ENCODE measurements at regions of chr17 and their contacts with region 1.

Region 1: GRCh38 chr17:15257258-15257788 is 7.8 kb downstream of the PMP22 start:
- ATAC-seq: peak in 4 of 8 experiments; percentile 2 to 18 (median 6)
- H3K4me3 ChIP-seq: no peak overlapping the region
- H3K27ac ChIP-seq: no peak overlapping the region
- H3K4me1 ChIP-seq: no peaks in the 10 kb centered on the region

Region 2: GRCh38 chr17:15143524-15143923 is 113.8 kb before region 1 on chr17:
- in situ Hi-C with region 1: no loop called
- ATAC-seq: no peak
- H3K4me3 ChIP-seq: no peak overlapping the region
- H3K27ac ChIP-seq: no peak overlapping the region
- H3K4me1 ChIP-seq: no peaks in the 10 kb centered on the region

Region 3: DNA sequence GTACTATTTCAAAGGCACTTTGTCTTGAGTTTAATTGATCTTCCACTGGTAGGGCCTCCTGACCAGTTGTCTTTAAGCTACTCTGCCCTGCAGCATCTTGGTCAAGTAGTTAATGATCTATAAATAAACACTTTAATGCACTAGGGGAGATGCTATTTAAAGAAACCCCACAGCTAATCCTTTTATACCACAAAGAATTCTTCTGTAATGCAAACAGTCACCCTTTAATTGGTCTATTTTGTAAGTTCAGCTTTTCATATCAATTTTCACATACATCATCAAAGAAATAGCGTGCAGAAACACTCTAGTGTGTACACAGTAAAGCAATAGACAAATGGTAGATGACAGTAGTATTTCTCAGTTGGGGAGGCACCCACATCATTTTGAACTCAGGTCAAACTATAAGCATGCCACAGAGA is 62.5 kb before region 1 on chr17:
- in situ Hi-C with region 1: no loop called
- ATAC-seq: peak in 6 of 8 experiments; percentile 16 to 49 (median 29)
- H3K4me3 ChIP-seq: no peak overlapping the region
- H3K27ac ChIP-seq: no peak overlapping the region
- H3K4me1 ChIP-seq: peaks cover 0 to 9% of the 10 kb centered on the region in 2 donors

Region 4: DNA sequence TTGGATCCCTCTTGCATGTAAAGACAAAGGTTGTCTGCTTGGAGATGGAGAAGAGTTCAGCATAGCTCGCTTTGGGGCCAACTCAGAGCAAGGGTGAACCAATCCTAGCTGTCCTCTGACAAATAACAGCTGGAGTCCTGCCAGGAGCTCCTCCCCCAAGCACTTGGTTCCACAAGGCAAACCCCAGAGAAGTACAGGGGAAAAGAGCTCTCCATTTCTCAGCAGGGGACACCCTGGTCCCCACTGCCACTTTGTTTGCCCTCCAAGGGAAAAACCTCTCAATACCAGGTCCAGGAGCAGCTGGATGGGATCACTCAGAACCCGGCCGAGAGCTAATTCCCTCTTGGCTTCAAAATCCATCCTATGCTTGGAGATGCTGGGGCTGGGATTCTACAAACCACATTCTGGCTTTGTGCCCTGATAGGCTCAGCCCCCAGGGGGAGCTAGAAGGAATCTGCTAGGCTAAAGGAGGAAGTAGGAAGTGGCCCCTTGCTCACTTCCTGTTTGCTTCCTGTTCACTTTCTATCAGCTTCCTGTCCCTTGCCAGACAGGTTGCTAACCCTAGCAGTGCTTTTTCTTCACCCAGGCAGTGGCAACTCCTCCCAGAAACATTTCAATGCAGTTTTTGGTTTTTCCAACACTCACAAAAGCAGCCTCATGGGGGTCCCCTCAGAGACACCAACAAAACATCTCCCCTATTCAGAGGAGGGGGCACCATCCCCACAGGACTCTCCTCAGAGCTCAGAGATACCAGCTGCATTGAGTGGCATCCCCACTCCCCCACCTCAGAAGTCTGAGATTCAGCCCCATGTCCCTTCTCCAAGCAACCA is 179.4 kb after region 1 on chr17:
- in situ Hi-C with region 1: loop called in 1 of 9 experiments (anchors 25 kb)
- ATAC-seq: peak in 1 of 8 experiments; percentile 5
- H3K4me3 ChIP-seq: no peak overlapping the region
- H3K27ac ChIP-seq: no peak overlapping the region
- H3K4me1 ChIP-seq: no peaks in the 10 kb centered on the region

Region 5: DNA sequence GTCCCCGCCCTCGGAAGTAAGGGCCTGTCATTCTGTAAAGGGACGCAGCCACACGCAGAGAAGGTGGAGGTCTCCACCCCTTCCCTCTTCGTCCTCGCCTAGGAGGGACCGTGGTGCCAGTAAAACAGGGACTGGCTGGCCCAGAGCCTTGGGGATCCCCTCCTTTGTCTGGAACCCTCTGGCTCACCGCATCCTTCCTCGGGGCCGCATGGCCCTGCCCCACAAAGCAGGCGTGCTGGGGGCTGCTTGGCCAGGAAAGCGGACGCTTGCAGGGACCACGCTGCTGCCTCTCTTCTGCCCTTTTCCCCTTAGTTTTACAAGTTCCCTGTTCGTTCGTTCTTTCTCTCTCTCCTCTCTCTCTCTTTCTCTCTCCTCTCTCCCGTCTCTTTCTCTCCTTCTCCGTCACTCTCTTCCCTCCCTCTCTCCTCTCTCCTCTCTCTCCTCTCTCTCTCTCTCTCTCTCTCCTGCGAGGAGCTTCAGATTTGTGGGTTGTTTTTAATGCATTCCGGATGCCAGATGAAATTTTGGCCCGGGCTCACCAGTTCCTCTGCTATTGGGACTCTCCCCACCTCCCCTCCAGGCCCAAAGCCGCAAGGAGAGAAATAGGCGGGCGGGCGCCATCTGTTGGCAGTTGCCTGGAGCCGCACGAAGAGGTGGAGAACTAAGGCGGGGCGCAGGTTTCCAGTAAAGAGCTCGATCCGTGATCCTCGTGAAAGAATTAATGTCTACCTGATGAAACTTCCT is 245.2 kb after region 1 on chr17:
- in situ Hi-C with region 1: loop called in 6 of 9 experiments (anchors 5 to 25 kb)
- ATAC-seq: peak; percentile 62 to 98 (median 84)
- H3K4me3 ChIP-seq: no peak overlapping the region
- H3K27ac ChIP-seq: no peak overlapping the region
- H3K4me1 ChIP-seq: no peaks in the 10 kb centered on the region

Region 6: DNA sequence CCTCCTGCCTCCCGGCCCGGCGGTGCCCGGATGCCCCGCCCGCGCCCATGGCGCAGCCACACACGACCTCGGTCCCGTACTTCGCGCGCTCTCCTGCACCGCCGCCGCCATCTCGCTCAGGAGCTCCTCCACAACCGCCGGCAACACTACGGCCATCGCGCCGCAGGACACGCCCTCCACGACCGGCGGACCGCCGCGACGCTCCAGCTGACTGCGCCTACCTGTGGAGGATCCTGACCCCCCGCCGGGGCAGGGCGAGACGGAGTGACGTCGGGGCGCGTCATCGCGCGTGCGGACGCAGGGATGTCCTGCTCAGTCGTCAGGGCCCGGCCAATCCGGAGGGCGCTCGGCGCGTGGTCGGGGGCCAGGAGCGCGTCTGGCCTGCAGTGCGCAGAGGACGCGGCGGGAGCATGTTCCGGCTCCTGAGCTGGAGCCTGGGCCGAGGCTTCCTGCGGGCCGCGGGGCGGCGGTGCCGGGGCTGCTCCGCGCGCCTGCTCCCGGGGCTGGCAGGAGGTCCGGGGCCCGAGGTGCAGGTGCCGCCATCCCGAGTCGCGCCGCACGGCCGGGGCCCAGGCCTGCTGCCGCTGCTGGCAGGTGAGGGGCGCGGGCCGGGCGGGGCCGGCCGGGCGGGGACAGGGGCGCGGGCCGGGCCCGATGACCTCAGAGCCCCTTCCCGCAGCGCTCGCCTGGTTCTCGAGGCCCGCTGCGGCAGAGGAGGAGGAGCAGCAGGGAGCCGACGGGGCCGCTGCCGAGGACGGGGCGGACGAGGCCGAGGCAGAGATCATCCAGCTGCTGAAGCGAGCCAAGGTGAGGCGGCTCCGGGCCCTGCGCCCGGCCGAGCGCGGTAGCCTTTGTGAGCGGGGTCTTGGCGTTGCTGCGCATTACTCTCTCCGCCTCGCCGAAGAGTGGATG is 742.4 kb after region 1 on chr17 and contains the starts of genes TTC19 and ZSWIM7:
- in situ Hi-C with region 1: loop called in 1 of 9 experiments (anchors 25 kb)
- ATAC-seq: peak; percentile 88 to 97 (median 96)
- H3K4me3 ChIP-seq: peak within 1 kb of the TSS; percentile 46 to 73 (median 59)
- H3K27ac ChIP-seq: peak within 1 kb of the TSS; percentile 81 to 91
- H3K4me1 ChIP-seq: peaks cover 9 to 10% of the 10 kb centered on the region in 2 donors
- total RNA-seq, gene TTC19: 27.7 to 68.4 (median 38.8) TPM
- total RNA-seq, gene ZSWIM7: 11.0 to 33.1 (median 22.4) TPM